ENCODE measurements at regions of chr6 and their contacts with region 1.

Region 1: DNA sequence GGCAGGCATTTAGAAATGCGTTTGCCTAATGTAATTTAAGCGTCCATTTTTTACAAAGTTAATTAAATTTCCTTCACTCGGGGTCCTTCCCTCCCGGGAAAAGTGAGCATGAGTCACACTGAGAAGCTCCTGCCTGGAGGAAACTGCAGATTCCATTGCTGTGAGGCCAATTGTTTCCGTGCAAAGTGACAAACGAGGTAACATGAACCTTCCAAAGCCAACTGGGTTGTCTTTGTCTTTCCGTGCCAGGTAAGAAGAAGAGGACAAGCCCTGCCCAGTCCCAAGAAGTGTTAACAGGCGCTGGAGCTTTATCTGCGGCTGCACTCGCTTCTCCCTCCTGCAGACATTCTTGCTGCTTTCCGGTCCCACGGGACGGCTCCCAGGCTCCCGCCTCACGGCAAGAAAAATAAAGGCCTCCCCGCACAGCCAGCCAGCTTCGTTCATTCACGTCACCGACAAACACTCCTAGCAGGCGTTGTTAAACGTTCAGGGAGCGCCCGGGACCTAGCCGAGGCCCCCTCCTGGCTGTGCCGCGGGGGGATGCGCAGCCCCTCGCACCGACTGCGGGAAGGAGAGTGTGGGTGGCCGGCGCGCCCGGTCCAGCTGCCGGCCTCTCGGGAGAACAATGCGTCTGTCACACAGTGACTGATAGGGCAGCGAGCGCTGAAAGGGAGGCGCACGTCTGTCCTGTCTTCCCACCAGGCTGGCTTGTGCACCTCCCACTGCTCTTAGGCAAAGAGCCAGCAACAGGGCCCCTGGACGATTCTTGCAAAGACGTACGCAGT is 61.5 kb upstream of the HDDC2 start:
- DNase-seq: peak; percentile 12 to 75
- H3K4me3 ChIP-seq: peak overlapping the region; percentile 68 to 76
- H3K27ac ChIP-seq: peak overlapping the region; percentile 89 to 90
- H3K4me1 ChIP-seq: peaks cover 0 to 25% of the 10 kb centered on the region in 2 donors
- H3K27me3 ChIP-seq: no peaks in the 10 kb centered on the region
- CTCF ChIP-seq: no peak

Region 2: DNA sequence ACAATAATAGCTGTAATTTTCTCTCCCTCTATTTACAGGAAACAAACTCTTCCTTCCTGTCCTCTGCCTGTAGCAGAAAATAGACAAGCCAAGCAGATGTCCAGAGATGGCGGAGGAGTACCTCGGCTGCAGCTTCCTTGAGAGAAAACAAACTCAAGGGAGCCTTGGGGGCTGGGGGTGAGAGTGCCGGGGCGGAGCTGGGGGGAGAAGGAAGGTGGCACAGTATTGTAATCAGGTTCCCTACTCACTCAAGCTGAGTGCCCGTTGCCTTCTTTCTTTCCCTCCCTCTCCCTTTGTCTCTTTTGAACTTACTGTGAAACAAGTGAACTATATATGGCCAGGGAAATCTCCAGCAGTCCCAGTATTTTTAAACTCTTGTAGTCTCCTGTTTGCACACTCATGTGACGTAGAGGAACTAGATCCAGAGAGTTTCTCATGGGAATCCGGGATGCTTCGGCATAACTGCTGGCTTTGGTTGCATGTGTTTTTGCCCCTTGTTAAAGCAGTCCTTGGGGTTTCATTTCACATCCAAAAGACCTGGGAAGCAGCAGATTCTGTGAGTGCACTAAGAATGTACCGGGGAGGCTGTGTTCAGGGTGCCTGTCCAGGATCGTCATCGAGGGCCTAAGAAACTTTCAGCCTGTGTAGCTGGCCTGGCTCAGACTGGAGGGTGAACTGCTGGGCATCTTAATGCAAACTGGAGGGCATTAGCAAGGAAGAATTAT is 16.9 kb before region 1 on chr6:
- intact Hi-C with region 1: no loop called
- DNase-seq: no peak
- H3K4me3 ChIP-seq: peak overlapping the region; percentile 32 to 55
- H3K27ac ChIP-seq: peak overlapping the region; percentile 70 to 75
- H3K4me1 ChIP-seq: no peaks in the 10 kb centered on the region
- H3K27me3 ChIP-seq: no peaks in the 10 kb centered on the region
- CTCF ChIP-seq: no peak

Region 3: GRCh38 chr6:125444006-125444923 is 81.0 kb after region 1 on chr6:
- intact Hi-C with region 1: loop called (anchors 2 kb)
- DNase-seq: peak in 1 of 2 donors; percentile 84
- H3K4me3 ChIP-seq: peak overlapping the region; percentile 32 to 51
- H3K27ac ChIP-seq: peak overlapping the region; percentile 87
- H3K4me1 ChIP-seq: peaks cover 0 to 15% of the 10 kb centered on the region in 2 donors
- H3K27me3 ChIP-seq: no peaks in the 10 kb centered on the region
- CTCF ChIP-seq: no peak

Region 4: GRCh38 chr6:125507987-125508655 is 144.9 kb after region 1 on chr6:
- intact Hi-C with region 1: no loop called
- DNase-seq: no peak
- H3K4me3 ChIP-seq: no peak overlapping the region
- H3K27ac ChIP-seq: no peak overlapping the region
- H3K4me1 ChIP-seq: no peaks in the 10 kb centered on the region
- H3K27me3 ChIP-seq: no peaks in the 10 kb centered on the region
- CTCF ChIP-seq: no peak

Region 5: DNA sequence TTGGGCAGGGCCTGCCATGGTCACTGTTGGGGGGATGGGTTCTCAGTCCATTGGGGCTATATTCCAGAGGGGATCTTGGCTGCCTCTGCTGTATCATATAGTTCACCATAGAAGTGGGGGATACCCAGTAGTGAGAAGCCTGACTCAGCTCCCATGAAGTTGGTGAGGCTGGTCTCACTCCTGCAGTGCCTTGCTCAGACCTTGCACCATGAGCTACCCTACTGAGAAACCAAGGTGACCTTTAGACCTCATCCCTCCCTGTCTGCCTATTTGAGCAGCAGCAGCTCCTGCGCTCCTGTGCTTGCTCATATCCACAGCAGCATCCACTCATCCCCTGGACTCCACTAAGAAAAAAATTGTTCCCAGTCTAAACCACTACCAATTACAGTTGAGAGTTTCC is 330.2 kb after region 1 on chr6:
- intact Hi-C with region 1: no loop called
- DNase-seq: no peak
- H3K4me3 ChIP-seq: no peak overlapping the region
- H3K27ac ChIP-seq: no peak overlapping the region
- H3K4me1 ChIP-seq: peaks cover 0 to 3% of the 10 kb centered on the region in 2 donors
- H3K27me3 ChIP-seq: no peaks in the 10 kb centered on the region
- CTCF ChIP-seq: no peak

Measured in ascending aorta (tissue), 2 donors.